Vagina (tissue), 2 donors: ENCODE measurements at regions of chr12 and their contacts with region 1.

Region 1: DNA sequence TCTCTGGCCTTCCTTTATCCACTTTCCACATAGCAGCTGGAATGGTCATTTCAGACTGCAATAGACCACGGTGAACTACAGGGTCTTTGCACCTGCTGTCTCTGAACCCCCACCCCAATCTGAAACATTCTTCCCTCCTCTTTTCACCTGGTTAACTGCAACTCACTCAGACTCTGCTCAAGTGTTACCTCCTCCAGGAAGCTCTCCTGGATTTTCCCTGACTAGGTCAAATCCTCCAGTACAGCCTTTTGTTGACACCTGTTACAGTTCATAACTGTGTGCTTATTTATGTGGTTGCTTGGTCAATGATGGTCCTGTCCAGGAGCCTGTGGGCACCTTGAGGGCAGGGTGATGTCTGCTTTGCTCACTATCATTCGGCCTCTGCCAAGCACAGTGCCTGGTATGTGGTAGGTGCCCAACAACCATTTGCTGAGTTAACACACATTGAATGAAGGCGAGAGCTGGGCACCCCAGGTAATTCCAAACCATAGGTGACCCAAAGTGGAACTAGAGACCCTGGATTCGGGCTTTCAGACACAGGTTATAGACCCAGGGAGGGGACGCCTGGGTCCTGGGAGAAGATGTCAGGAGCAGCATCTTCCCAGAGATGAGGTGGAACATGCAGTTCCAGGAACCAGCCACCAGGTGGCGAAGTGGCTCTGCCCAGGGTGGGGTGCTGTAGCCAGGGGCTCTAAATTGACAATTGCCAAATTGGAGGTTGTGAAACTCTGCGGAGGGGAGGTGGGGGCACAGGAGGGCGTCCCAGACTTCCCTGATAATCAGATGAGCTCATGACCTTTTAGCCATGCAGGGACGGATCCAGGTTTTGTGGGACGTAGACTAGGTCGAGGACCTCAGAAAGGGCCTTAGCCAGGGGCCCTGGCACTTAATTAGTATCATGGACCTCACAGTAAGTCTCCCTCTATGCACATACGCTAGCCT is 28.1 kb downstream of the TRPV4 start:
- DNase-seq: no peak
- H3K4me3 ChIP-seq: no peak overlapping the region
- H3K27ac ChIP-seq: no peak overlapping the region
- H3K4me1 ChIP-seq: no peaks in the 10 kb centered on the region
- H3K27me3 ChIP-seq: no peaks in the 10 kb centered on the region
- CTCF ChIP-seq: peak; percentile 83 to 93 (median 85)
- POLR2A ChIP-seq: no peak

Region 2: GRCh38 chr12:109642506-109643132 is 162.5 kb before region 1 on chr12:
- intact Hi-C with region 1: no loop called
- DNase-seq: no peak
- H3K4me3 ChIP-seq: no peak overlapping the region
- H3K27ac ChIP-seq: no peak overlapping the region
- H3K4me1 ChIP-seq: no peaks in the 10 kb centered on the region
- H3K27me3 ChIP-seq: no peaks in the 10 kb centered on the region
- CTCF ChIP-seq: no peak
- POLR2A ChIP-seq: no peak

Region 3: GRCh38 chr12:109861689-109862314 is 56.7 kb after region 1 on chr12:
- intact Hi-C with region 1: no loop called
- DNase-seq: no peak
- H3K4me3 ChIP-seq: no peak overlapping the region
- H3K27ac ChIP-seq: no peak overlapping the region
- H3K4me1 ChIP-seq: peaks cover 23% of the 10 kb centered on the region
- H3K27me3 ChIP-seq: no peaks in the 10 kb centered on the region
- CTCF ChIP-seq: no peak
- POLR2A ChIP-seq: no peak

Region 4: GRCh38 chr12:109879403-109880015 is 74.4 kb after region 1 on chr12:
- intact Hi-C with region 1: loop called (anchors 5 kb)
- DNase-seq: no peak
- H3K4me3 ChIP-seq: peak overlapping the region; percentile 89 to 94
- H3K27ac ChIP-seq: peak overlapping the region; percentile 89
- H3K4me1 ChIP-seq: peaks cover 55% of the 10 kb centered on the region
- H3K27me3 ChIP-seq: no peaks in the 10 kb centered on the region
- CTCF ChIP-seq: no peak
- POLR2A ChIP-seq: no peak

Region 5: GRCh38 chr12:110431957-110432587 is 627.0 kb after region 1 on chr12:
- intact Hi-C with region 1: no loop called
- DNase-seq: no peak
- H3K4me3 ChIP-seq: peak overlapping the region; percentile 38 to 49
- H3K27ac ChIP-seq: peak overlapping the region; percentile 58
- H3K4me1 ChIP-seq: no peaks in the 10 kb centered on the region
- H3K27me3 ChIP-seq: no peaks in the 10 kb centered on the region
- CTCF ChIP-seq: no peak
- POLR2A ChIP-seq: no peak